Activated B cell treated with CpG ODN at 0.5 μM for 24 hours (primary cell): ENCODE measurements at regions of chr2 and their contacts with region 1.

Region 1: GRCh38 chr2:38750891-38751595 is at the start of gene SRSF7:
- DNase-seq: peak; percentile 98
- ATAC-seq: peak; percentile 75
- H3K4me3 Mint-ChIP-seq: peak within 1 kb of the TSS; percentile 98
- H3K27ac Mint-ChIP-seq: peak within 1 kb of the TSS; percentile 99
- H3K4me1 Mint-ChIP-seq: peaks cover 59% of the 10 kb centered on the region
- H3K27me3 Mint-ChIP-seq: no peaks in the 10 kb centered on the region
- CTCF ChIP-seq: no peak
- total RNA-seq, gene SRSF7: 247 and 254 TPM in 2 replicates

Region 2: DNA sequence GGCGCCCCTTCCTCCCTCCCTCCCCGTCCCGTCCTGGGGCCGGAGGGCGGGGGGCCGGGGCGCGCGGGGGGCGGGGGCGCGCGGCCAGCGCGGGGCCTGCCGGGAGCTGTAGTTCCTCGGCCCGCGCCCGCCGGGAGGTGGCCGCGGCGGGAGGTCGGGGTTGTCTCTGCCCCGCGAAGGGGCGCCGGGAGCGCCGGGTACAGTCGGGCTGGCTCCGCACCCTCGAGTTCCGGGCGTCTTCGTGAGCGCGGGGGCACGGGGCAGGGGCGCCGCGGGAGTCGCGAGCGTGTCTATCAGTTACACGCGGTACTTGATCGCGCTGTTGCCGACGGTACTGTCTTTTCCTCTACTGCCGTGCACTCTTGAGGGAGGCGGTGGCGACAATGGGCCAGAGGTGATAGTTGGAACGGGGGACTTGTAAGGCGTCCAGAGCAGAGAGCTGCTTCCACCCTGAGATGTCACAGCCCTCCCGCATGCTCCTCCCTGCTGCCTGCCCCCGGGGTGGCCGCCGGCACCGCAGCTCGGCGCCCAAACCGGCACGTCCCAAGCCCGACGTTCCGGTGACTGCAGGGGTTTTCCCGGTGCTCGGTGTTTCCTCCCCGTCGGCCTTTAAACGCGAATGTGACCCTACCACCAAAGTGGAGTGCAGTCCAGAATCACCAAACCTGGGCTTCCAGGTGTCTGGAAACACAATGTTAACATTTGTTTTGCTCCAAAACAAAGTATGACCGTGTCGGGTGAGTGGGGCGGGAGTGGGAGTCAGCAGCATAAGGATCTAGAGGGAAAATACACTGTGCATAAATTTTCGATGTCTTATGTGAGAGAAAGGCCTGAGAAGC is 1426.0 kb before region 1 on chr2 and contains the start of gene PRKD3:
- CTCF ChIA-PET with region 1: no interaction called
- POLR2A ChIA-PET with region 1: interaction called, 4 read pairs
- intact Hi-C with region 1: loop called (anchors 1 kb)
- DNase-seq: peak; percentile 73
- ATAC-seq: peak; percentile 83
- H3K4me3 Mint-ChIP-seq: peak within 1 kb of the TSS; percentile 97
- H3K27ac Mint-ChIP-seq: peak within 1 kb of the TSS; percentile 96
- H3K4me1 Mint-ChIP-seq: peaks cover 38% of the 10 kb centered on the region
- H3K27me3 Mint-ChIP-seq: no peaks in the 10 kb centered on the region
- CTCF ChIP-seq: no peak
- total RNA-seq, gene PRKD3: 73.0 and 82.5 TPM in 2 replicates

Region 3: DNA sequence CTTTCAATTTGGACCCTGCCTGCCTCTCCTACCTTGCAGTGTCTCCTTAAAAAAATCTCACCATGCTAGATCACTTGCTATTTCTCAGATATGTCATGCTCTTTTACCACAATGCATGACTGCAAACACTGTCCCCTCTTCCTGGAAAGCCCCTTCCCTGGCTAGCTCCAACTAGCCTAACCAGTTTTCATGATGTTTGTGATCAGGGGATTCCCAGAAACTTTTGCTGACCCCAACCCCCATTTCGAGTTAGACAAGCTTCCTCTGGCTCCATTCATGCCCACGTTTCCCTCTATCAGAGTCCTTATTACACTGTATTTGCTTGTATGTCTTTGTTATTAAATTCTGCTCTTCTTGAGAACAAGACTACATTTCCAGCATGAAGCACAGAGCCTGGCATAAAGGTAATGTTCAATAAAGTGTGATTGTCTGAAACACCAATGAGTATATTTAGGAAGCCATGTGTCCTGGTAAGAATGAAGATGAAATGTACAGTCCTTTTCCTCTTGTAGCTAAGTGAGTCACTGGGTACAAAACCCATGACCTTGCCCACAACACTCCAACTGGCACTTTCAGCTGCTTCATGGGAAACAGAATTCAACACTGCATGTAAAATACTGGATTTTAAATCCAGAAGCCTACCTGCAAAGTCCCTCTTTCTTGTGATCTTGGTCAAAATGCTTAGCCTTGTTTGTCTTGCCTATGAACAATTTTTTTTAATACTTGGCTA is 312.0 kb before region 1 on chr2:
- CTCF ChIA-PET with region 1: no interaction called
- POLR2A ChIA-PET with region 1: no interaction called
- intact Hi-C with region 1: no loop called
- DNase-seq: no peak
- ATAC-seq: no peak
- H3K4me3 Mint-ChIP-seq: no peak overlapping the region
- H3K27ac Mint-ChIP-seq: no peak overlapping the region
- H3K4me1 Mint-ChIP-seq: no peaks in the 10 kb centered on the region
- H3K27me3 Mint-ChIP-seq: peaks cover 20% of the 10 kb centered on the region
- CTCF ChIP-seq: no peak

Region 4: GRCh38 chr2:38535744-38536506 is 215.1 kb before region 1 on chr2:
- CTCF ChIA-PET with region 1: no interaction called
- POLR2A ChIA-PET with region 1: interaction called, 30 read pairs
- intact Hi-C with region 1: loop called (anchors 2 kb)
- DNase-seq: peak; percentile 84
- ATAC-seq: peak; percentile 47
- H3K4me3 Mint-ChIP-seq: peak overlapping the region; percentile 75
- H3K27ac Mint-ChIP-seq: no peak overlapping the region
- H3K4me1 Mint-ChIP-seq: peaks cover 39% of the 10 kb centered on the region
- H3K27me3 Mint-ChIP-seq: peaks cover 11% of the 10 kb centered on the region
- CTCF ChIP-seq: peak; percentile 92

Region 5: GRCh38 chr2:38665854-38666555 is 85.0 kb before region 1 on chr2 and contains the start of gene GALM:
- CTCF ChIA-PET with region 1: no interaction called
- POLR2A ChIA-PET with region 1: interaction called, 31 read pairs
- intact Hi-C with region 1: no loop called
- DNase-seq: peak; percentile 23
- ATAC-seq: peak; percentile 78
- H3K4me3 Mint-ChIP-seq: peak within 1 kb of the TSS; percentile 80
- H3K27ac Mint-ChIP-seq: peak within 1 kb of the TSS; percentile 59
- H3K4me1 Mint-ChIP-seq: peaks cover 26% of the 10 kb centered on the region
- H3K27me3 Mint-ChIP-seq: no peaks in the 10 kb centered on the region
- CTCF ChIP-seq: no peak
- total RNA-seq, gene GALM: 3.5 and 5.4 TPM in 2 replicates

Region 6: GRCh38 chr2:38778687-38779082 is 27.6 kb after region 1 on chr2:
- CTCF ChIA-PET with region 1: no interaction called
- POLR2A ChIA-PET with region 1: interaction called, 40 read pairs
- intact Hi-C with region 1: loop called (anchors 1 kb)
- DNase-seq: no peak
- ATAC-seq: no peak
- H3K4me3 Mint-ChIP-seq: peak overlapping the region; percentile 91
- H3K27ac Mint-ChIP-seq: peak overlapping the region; percentile 89
- H3K4me1 Mint-ChIP-seq: peaks cover 12% of the 10 kb centered on the region
- H3K27me3 Mint-ChIP-seq: peaks cover 10% of the 10 kb centered on the region
- CTCF ChIP-seq: no peak

Region 7: GRCh38 chr2:38863378-38863695 is 112.3 kb after region 1 on chr2:
- CTCF ChIA-PET with region 1: no interaction called
- POLR2A ChIA-PET with region 1: no interaction called
- intact Hi-C with region 1: no loop called
- DNase-seq: no peak
- ATAC-seq: no peak
- H3K4me3 Mint-ChIP-seq: no peak overlapping the region
- H3K27ac Mint-ChIP-seq: no peak overlapping the region
- H3K4me1 Mint-ChIP-seq: no peaks in the 10 kb centered on the region
- H3K27me3 Mint-ChIP-seq: no peaks in the 10 kb centered on the region
- CTCF ChIP-seq: no peak

Region 8: DNA sequence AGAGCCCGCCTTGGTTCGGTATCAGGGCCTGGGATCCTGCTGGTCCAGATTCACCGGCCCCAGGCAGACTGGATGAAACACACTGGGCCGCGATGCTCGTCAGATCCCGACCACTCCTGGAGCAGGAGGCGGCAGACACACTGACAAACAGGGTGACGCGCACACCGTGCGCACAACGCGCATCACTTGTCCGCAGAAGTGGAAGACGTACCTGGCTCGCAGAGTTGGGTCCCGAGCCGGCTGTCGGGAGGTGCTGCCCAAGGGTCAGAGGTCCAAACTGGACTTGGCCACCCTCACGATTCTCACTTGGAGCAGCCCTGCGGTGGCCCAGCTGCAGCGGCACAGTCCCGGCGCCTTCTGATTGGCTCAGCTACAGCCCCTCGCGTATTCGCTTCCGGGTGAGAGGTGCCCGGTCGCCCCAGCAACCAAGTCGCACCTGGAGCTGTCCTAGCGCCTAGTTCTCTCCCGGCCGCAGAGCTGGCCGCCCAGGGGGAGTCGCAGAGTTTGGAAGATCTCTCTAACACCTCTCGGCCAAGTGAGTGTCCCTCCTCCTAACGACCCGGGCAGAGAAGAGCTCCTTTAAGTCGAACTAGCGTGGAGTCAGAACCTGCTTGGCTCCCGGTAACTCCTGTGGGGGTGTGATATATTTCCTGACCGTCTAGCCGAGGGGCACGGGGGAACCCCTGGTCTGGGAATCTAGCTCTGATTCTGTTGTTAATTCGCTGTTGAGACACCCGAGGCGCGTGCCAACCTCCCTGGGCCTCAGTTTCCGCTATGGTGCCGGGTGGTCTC is 124.7 kb after region 1 on chr2 and contains the starts of genes DHX57 and MORN2:
- CTCF ChIA-PET with region 1: no interaction called
- POLR2A ChIA-PET with region 1: interaction called, 32 read pairs
- intact Hi-C with region 1: loop called (anchors 1 kb)
- DNase-seq: peak; percentile 69
- ATAC-seq: peak; percentile 98
- H3K4me3 Mint-ChIP-seq: peak within 1 kb of the TSS; percentile 93
- H3K27ac Mint-ChIP-seq: peak within 1 kb of the TSS; percentile 79
- H3K4me1 Mint-ChIP-seq: peaks cover 22% of the 10 kb centered on the region
- H3K27me3 Mint-ChIP-seq: no peaks in the 10 kb centered on the region
- CTCF ChIP-seq: no peak
- total RNA-seq, gene DHX57: 20.4 and 21.5 TPM in 2 replicates
- total RNA-seq, gene MORN2: 4.1 and 4.8 TPM in 2 replicates

Region 9: GRCh38 chr2:39492095-39492590 is 741.1 kb after region 1 on chr2:
- CTCF ChIA-PET with region 1: no interaction called
- POLR2A ChIA-PET with region 1: no interaction called
- intact Hi-C with region 1: loop called (anchors 5 kb)
- DNase-seq: no peak
- ATAC-seq: peak; percentile 92
- H3K4me3 Mint-ChIP-seq: peak overlapping the region; percentile 66
- H3K27ac Mint-ChIP-seq: peak overlapping the region; percentile 87
- H3K4me1 Mint-ChIP-seq: peaks cover 57% of the 10 kb centered on the region
- H3K27me3 Mint-ChIP-seq: peaks cover 10% of the 10 kb centered on the region
- CTCF ChIP-seq: no peak